HCT116 (cell line): ENCODE measurements at regions of chr12 and their contacts with region 1.

Region 1: DNA sequence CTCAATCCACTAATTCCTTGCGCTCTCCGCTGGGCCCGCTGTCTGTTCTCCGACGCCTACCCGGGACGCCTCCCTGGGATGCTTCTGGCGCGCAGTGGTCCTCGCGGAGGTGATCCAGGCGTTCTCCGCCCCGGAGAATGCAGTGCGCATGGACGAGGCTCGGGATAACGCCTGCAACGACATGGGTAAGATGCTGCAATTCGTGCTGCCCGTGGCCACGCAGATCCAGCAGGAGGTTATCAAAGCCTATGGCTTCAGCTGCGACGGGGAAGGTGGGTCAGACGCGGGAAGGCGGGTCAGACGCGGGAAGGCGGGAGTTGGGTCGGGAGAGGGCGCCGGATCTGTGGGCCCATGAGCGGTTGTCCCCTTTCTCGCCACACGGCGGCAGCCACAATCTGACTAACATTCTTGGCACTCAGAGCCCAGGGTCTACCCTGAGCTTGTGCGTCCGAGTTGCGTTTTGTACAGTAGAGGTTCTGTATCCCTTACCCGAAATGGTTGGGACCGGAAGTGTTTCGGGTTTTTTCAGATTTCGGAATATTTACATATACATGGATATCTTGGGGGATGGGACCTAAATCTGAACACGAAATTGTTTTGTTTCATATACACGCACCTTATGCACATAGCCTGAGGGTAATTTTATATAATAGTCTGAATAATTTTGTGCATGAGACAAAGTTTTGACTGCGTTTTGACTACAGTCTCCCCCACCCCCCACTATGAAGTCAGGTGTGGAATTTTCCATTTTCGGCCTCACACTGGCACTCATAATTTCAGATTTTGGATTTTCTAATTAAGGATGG is 762 bp downstream of the C12orf57 start:
- DNase-seq: peak; percentile 89
- ATAC-seq: peak; percentile 39
- H3K4me3 ChIP-seq: peak overlapping the region; percentile 68 to 71
- H3K27ac ChIP-seq: peak overlapping the region; percentile 99
- H3K4me1 ChIP-seq: peaks cover 22 to 66% of the 10 kb centered on the region in 2 experiments
- H3K27me3 ChIP-seq: no peaks in the 10 kb centered on the region
- CTCF ChIP-seq: peak in 2 of 3 experiments; percentile 76 to 77; a peak in 4 of 6 replicates
- POLR2A ChIP-seq: no peak
- RAD21 ChIP-seq: no peak

Region 2: GRCh38 chr12:6867413-6868210 is 77.0 kb before region 1 on chr12 and contains the start of gene TPI1:
- CTCF ChIA-PET with region 1: interaction called, 10 read pairs
- POLR2A ChIA-PET with region 1: interaction called, 106 read pairs
- RAD21 ChIA-PET with region 1: interaction called, 4 read pairs
- intact Hi-C with region 1: loop called (anchors 1 kb)
- DNase-seq: no peak
- ATAC-seq: peak; percentile 73
- H3K4me3 ChIP-seq: peak within 1 kb of the TSS; percentile 97 to 99
- H3K27ac ChIP-seq: peak within 1 kb of the TSS; percentile 96
- H3K4me1 ChIP-seq: peaks cover 33 to 61% of the 10 kb centered on the region in 2 experiments
- H3K27me3 ChIP-seq: no peaks in the 10 kb centered on the region
- CTCF ChIP-seq: no peak
- POLR2A ChIP-seq: peak; percentile 99
- RAD21 ChIP-seq: no peak
- total RNA-seq, gene TPI1: 1,068 TPM

Region 3: DNA sequence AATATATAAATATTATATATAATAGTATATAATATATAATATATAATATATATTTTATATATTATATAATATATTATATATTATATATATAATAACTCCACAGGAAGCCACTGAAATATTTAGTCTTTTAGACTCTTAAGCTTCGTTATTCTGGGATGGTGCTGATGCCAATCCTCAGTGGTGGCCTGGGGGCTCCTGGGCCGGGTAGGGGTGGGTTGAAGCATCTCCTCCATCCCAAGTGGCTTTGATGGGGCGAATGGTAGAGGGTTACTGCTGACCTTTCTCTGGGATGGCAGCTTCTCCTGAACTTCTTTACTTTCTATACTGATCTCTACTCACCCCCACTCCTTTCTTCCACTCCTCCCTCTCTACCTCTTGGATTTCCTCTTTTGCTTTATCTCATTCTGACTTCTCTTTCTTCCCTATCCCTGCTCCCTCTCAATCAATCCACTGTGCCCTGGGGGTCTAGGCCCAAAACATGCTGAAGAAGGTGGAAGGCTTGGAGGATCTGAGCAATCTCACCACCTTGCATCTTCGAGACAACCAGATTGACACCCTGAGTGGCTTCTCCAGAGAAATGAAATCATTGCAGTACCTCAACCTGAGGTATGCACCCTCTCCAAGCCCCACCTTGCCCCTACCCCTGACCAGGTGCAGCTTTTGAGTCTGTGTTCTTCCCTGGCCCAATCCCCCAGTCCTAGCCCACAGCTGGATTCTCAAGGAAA is 35.0 kb before region 1 on chr12:
- CTCF ChIA-PET with region 1: no interaction called
- POLR2A ChIA-PET with region 1: interaction called, 16 read pairs
- RAD21 ChIA-PET with region 1: no interaction called
- intact Hi-C with region 1: no loop called
- DNase-seq: no peak
- ATAC-seq: no peak
- H3K4me3 ChIP-seq: no peak overlapping the region
- H3K27ac ChIP-seq: no peak overlapping the region
- H3K4me1 ChIP-seq: peaks cover 8 to 20% of the 10 kb centered on the region in 2 experiments
- H3K27me3 ChIP-seq: no peaks in the 10 kb centered on the region
- CTCF ChIP-seq: no peak
- POLR2A ChIP-seq: no peak
- RAD21 ChIP-seq: no peak

Region 4: DNA sequence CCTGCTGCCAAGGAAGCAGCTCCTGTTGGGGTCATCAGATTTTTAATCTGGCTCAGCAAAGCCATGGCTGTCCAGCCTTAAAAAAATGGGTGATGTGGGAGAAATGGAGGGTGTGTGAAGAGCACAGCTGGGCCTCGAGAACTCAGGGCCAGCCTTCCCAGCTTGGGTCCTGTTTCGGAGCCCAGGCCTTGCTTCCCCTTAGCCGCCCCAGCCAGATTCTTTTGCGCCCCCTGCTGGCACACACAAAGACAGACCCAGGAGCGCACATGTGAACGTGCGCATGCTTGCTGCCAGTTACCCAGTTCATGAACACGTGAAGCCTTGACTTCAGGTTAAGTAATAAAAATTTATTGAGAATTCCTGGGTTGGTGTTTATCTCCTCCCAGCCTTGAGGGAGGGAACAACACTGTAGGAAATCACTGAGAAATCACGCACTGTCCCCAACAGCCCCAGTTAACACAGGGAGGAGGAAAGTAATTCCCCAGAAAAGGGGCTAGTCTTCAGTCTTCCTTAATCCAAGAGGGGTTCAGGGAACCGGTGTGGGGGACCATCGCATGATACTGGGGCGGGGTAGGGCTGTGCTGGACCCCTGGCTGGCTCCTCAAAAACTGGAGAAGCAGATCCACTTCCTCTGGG is 20.6 kb after region 1 on chr12:
- CTCF ChIA-PET with region 1: interaction called, 101 read pairs
- POLR2A ChIA-PET with region 1: interaction called, 269 read pairs
- RAD21 ChIA-PET with region 1: interaction called, 5 to 22 read pairs
- intact Hi-C with region 1: loop called (anchors 1 kb)
- DNase-seq: peak; percentile 79
- ATAC-seq: peak; percentile 31
- H3K4me3 ChIP-seq: peak overlapping the region; percentile 96 to 99
- H3K27ac ChIP-seq: peak overlapping the region; percentile 97
- H3K4me1 ChIP-seq: peaks cover 39 to 79% of the 10 kb centered on the region in 2 experiments
- H3K27me3 ChIP-seq: no peaks in the 10 kb centered on the region
- CTCF ChIP-seq: peak in 2 of 3 experiments; percentile 92 to 96; a peak in 4 of 6 replicates
- POLR2A ChIP-seq: peak; percentile 56
- RAD21 ChIP-seq: no peak

Region 5: DNA sequence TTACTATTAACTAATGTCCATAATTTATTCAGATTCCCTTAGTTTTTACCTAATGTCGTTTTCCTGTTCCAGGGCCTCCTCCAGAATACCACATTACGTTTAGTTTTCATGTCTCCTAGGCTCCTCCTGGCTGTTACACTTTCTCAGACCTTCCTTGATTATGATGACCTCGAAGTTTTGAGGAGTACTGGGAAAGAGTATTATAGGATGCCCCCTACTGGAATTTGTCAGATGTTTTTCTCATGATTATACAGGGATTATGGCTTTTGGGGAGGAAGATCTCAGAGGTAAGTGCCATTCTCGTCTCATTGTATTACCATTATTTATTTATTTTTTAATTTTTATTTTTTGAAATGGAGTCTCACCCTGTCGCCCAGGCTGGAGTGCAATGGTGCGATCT is 98.3 kb after region 1 on chr12:
- CTCF ChIA-PET with region 1: interaction called, 4 read pairs
- POLR2A ChIA-PET with region 1: interaction called, 18 read pairs
- RAD21 ChIA-PET with region 1: interaction called in 1 of 2 experiments, 3 read pairs
- intact Hi-C with region 1: loop called (anchors 10 kb)
- DNase-seq: peak; percentile 56
- ATAC-seq: peak; percentile 95
- H3K4me3 ChIP-seq: no peak overlapping the region
- H3K27ac ChIP-seq: no peak overlapping the region
- H3K4me1 ChIP-seq: peaks cover 0 to 9% of the 10 kb centered on the region in 2 experiments; a peak in 1 of 4 replicates
- H3K27me3 ChIP-seq: no peaks in the 10 kb centered on the region
- CTCF ChIP-seq: peak; percentile 43 to 89 (median 63); a peak in 5 of 6 replicates
- POLR2A ChIP-seq: no peak
- RAD21 ChIP-seq: peak; percentile 83

Region 6: GRCh38 chr12:7092229-7092985 is 147.8 kb after region 1 on chr12 and contains the start of gene C1R:
- CTCF ChIA-PET with region 1: interaction called, 6 read pairs
- POLR2A ChIA-PET with region 1: interaction called, 10 read pairs
- RAD21 ChIA-PET with region 1: no interaction called
- intact Hi-C with region 1: loop called (anchors 1 kb)
- DNase-seq: no peak
- ATAC-seq: peak; percentile 85
- H3K4me3 ChIP-seq: no peak within 1 kb of the TSS
- H3K27ac ChIP-seq: peak within 1 kb of the TSS; percentile 13; the same call in 1 of the 2 replicates
- H3K4me1 ChIP-seq: peaks cover 0 to 6% of the 10 kb centered on the region in 2 experiments; a peak in 1 of 4 replicates
- H3K27me3 ChIP-seq: 0 out of 2 replicates have a peak, but pooled peaks cover 2% of the 10 kb centered on the region
- CTCF ChIP-seq: peak; percentile 84 to 89 (median 87)
- POLR2A ChIP-seq: no peak
- RAD21 ChIP-seq: peak; percentile 84
- total RNA-seq, gene C1R: 4.3 TPM

Region 7: GRCh38 chr12:7638760-7639555 is 694.4 kb after region 1 on chr12:
- CTCF ChIA-PET with region 1: no interaction called
- POLR2A ChIA-PET with region 1: interaction called, 3 read pairs
- RAD21 ChIA-PET with region 1: no interaction called
- intact Hi-C with region 1: loop called (anchors 5 kb)
- DNase-seq: peak; percentile 69
- ATAC-seq: peak; percentile 93
- H3K4me3 ChIP-seq: no peak overlapping the region
- H3K27ac ChIP-seq: no peak overlapping the region
- H3K4me1 ChIP-seq: peaks cover 0 to 7% of the 10 kb centered on the region in 2 experiments; a peak in 1 of 4 replicates
- H3K27me3 ChIP-seq: no peaks in the 10 kb centered on the region
- CTCF ChIP-seq: peak; percentile 58 to 93 (median 85)
- POLR2A ChIP-seq: no peak
- RAD21 ChIP-seq: peak; percentile 96